ENCODE measurements at regions of chr3 and their contacts with region 1.

Region 1: DNA sequence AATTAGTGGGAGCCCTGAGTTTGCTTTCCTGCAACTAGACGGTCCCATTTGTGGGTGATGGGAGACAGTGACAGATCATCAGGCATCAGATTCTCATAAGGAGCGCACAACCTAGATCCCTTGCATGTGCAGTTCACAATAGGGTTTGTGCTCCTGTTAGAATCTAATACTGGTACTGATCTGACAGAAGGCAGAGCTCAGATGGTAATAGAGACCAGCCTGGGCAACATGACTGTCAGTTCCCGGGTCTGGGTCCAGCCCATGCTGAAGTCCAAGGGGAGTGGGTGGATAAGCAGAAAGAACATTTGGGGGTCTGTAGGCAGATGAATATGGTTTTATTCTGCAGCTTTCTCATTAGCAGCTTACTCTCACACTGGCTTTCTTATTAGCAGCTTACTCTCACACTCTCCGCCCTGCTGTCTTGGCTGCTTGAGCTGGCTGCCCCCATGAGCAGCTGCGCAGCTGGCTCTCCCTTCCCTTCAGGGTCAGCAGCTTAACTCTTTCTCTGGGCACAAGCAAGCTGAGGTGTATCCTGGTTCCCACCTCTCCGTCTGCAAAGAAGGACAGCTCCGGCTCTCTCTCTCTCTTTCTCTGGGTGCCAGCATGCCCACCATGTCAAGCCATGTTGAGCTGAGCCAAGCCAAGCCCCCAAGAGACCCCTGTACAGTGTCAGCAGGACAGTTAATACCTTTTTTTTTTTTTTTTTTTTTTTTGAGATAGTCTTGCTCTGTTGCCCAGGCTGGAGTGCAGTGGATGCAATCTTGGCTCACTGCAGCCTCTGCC is 46.5 kb downstream of the KLHDC8B start:
- DNase-seq: no peak
- ATAC-seq: no peak
- H3K4me3 ChIP-seq: no peak overlapping the region
- H3K27ac ChIP-seq: peak overlapping the region; percentile 65
- H3K4me1 ChIP-seq: peaks cover 7% of the 10 kb centered on the region
- H3K27me3 ChIP-seq: no peaks in the 10 kb centered on the region
- CTCF ChIP-seq: no peak

Region 2: GRCh38 chr3:49237344-49237743 is 19.5 kb after region 1 on chr3:
- CTCF ChIA-PET with region 1: no interaction called
- POLR2A ChIA-PET with region 1: no interaction called
- intact Hi-C with region 1: loop called (anchors 1 kb)
- DNase-seq: peak; percentile 56
- ATAC-seq: peak; percentile 95
- H3K4me3 ChIP-seq: no peak overlapping the region
- H3K27ac ChIP-seq: peak overlapping the region; percentile 67
- H3K4me1 ChIP-seq: peaks cover 14% of the 10 kb centered on the region; the same call in 1 of the 2 replicates
- H3K27me3 ChIP-seq: no peaks in the 10 kb centered on the region
- CTCF ChIP-seq: no peak

Region 3: DNA sequence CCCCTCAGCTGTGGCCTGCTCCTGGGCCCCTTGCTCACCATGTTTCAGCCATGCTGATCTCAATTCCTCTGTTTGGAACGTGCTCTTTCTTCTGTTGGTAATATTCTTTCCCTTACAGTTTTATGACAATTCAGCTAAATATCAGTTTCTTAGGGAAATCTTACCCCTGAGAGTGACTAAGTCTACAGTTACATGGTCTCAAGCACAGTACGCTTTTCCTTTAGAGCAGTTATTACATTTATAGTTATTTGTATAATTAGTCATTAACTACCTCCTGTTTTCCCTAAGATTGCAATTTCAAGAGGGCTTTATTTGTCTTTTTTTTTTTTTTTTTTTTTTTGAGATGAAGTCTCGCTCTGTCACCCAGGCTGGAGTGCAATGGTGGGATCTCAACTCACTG is 35.6 kb after region 1 on chr3:
- CTCF ChIA-PET with region 1: no interaction called
- POLR2A ChIA-PET with region 1: no interaction called
- intact Hi-C with region 1: loop called (anchors 5 kb)
- DNase-seq: peak; percentile 59
- ATAC-seq: peak; percentile 85
- H3K4me3 ChIP-seq: no peak overlapping the region
- H3K27ac ChIP-seq: peak overlapping the region; percentile 83
- H3K4me1 ChIP-seq: peaks cover 21% of the 10 kb centered on the region
- H3K27me3 ChIP-seq: no peaks in the 10 kb centered on the region
- CTCF ChIP-seq: no peak

Region 4: GRCh38 chr3:49428697-49429100 is 210.8 kb after region 1 on chr3:
- CTCF ChIA-PET with region 1: no interaction called
- POLR2A ChIA-PET with region 1: no interaction called
- intact Hi-C with region 1: no loop called
- DNase-seq: no peak
- ATAC-seq: peak; percentile 3; the same call in 1 of the 2 replicates
- H3K4me3 ChIP-seq: peak overlapping the region; percentile 72
- H3K27ac ChIP-seq: no peak overlapping the region
- H3K4me1 ChIP-seq: peaks cover 5% of the 10 kb centered on the region; the same call in 1 of the 2 replicates
- H3K27me3 ChIP-seq: no peaks in the 10 kb centered on the region
- CTCF ChIP-seq: no peak

Measured in PC-3 (cell line).